H1 (cell line): ENCODE measurements at regions of chr3 and their contacts with region 1.

Region 1: DNA sequence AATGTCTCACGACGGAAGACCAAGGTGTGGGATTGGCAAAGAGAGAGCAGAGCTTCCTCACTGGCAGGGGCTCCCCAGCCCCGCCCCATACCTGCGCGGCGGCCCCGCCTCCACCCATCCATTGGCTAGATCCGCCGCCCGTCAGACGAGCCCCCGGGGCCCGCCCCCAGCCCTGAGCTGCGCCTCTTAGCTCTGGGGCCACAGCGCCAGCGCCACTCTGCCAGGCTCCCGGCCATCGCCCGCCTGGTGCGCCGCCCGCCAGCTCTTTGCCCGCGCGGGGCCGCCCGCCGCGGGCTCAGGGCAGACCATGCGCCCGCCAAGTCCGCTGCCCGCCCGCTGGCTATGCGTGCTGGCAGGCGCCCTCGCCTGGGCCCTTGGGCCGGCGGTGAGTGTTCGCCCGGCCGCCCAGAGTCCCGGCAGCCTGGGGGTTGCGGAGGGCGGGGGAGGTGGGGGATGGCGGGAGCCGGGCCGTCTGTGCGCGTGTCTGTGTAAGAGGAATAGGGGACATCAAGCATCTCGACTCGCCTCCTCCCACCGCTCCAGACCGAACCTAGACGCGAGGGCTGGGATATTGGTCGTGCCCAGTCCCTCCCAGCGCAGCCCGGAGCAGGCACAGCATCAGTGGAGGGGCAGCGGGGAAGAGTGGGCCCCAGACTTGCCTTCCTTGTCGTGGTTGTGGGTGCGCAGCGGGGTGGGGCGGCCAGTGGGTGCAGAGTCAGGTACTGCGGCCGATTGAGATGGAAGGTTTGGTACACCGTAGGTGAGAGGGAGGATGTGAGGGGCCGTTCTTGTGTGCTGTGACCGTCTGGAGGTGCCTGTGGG is at the start of gene VIPR1:
- DNase-seq: peak; percentile 73 to 99
- H3K4me3 ChIP-seq: peak within 1 kb of the TSS; percentile 50 to 77 (median 68)
- H3K27ac ChIP-seq: no peak within 1 kb of the TSS
- H3K4me1 ChIP-seq: peaks cover 0 to 12% (median 2%) of the 10 kb centered on the region in 4 experiments; a peak in 3 of 7 replicates
- H3K27me3 ChIP-seq: peaks cover 0 to 52% (median 35%) of the 10 kb centered on the region in 4 experiments; a peak in 6 of 7 replicates
- CTCF ChIP-seq: no peak
- EP300 ChIP-seq: no peak
- POLR2A ChIP-seq: peak in 1 of 2 experiments; percentile 65; a peak in 2 of 3 replicates
- RAD21 ChIP-seq: 0 out of 4 replicates have a peak, but pooled peaks of 1 of the 2 experiments have one; percentile 2
- total RNA-seq, gene VIPR1: 10.1 and 11.3 TPM in 2 replicates

Region 2: DNA sequence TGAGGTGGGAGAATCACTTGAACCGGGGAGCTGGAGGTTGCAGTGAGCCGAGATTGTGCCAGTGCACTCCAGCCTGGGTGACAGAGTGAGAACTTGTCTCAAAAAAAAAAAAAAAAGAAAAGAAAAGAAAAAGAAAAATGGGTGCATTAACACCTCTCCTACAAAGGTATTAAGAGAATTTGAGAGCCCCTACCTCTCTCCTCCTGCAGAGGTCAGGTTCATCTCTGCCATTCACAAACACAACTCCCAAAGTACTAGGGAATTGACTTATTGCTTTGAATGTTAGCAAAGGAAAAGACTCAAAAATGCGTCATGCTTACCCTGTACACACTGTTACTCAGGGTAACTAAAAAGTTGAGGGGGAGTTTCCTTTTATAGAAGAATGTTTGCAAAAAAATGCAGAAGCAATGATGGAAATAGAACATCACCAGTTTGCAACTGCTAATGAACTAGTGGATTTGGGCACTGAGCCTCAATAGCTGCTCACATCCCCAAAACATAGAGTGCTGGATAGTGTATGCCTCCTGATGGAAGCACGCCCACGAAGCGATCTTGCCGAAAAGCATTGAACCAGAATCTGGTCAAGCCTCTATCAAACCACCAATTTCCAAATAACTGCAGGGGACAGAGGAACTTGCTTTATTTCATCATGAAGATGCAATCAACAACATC is 76.8 kb before region 1 on chr3:
- CTCF ChIA-PET with region 1: no interaction called
- POLR2A ChIA-PET with region 1: no interaction called
- DNase-seq: no peak
- H3K4me3 ChIP-seq: no peak overlapping the region
- H3K27ac ChIP-seq: no peak overlapping the region
- H3K4me1 ChIP-seq: no peaks in the 10 kb centered on the region
- H3K27me3 ChIP-seq: no peaks in the 10 kb centered on the region
- CTCF ChIP-seq: no peak
- EP300 ChIP-seq: no peak
- POLR2A ChIP-seq: no peak
- RAD21 ChIP-seq: peak; percentile 13 to 15; a peak in 3 of 4 replicates

Region 3: GRCh38 chr3:42476225-42477125 is 26.2 kb before region 1 on chr3:
- CTCF ChIA-PET with region 1: interaction called, 10 read pairs
- POLR2A ChIA-PET with region 1: interaction called, 3 read pairs
- DNase-seq: no peak
- H3K4me3 ChIP-seq: no peak overlapping the region
- H3K27ac ChIP-seq: no peak overlapping the region
- H3K4me1 ChIP-seq: no peaks in the 10 kb centered on the region; a peak in 1 of 7 replicates
- H3K27me3 ChIP-seq: peaks cover 0 to 1% (median 0%) of the 10 kb centered on the region in 4 experiments; a peak in 2 of 7 replicates
- CTCF ChIP-seq: no peak
- EP300 ChIP-seq: no peak
- POLR2A ChIP-seq: no peak
- RAD21 ChIP-seq: no peak

Region 4: GRCh38 chr3:42524751-42525150 is 22.1 kb after region 1 on chr3:
- CTCF ChIA-PET with region 1: interaction called, 19 read pairs
- POLR2A ChIA-PET with region 1: interaction called, 4 read pairs
- DNase-seq: no peak
- H3K4me3 ChIP-seq: no peak overlapping the region
- H3K27ac ChIP-seq: no peak overlapping the region
- H3K4me1 ChIP-seq: no peaks in the 10 kb centered on the region; a peak in 1 of 7 replicates
- H3K27me3 ChIP-seq: no peaks in the 10 kb centered on the region
- CTCF ChIP-seq: no peak
- EP300 ChIP-seq: no peak
- POLR2A ChIP-seq: no peak
- RAD21 ChIP-seq: no peak

Region 5: DNA sequence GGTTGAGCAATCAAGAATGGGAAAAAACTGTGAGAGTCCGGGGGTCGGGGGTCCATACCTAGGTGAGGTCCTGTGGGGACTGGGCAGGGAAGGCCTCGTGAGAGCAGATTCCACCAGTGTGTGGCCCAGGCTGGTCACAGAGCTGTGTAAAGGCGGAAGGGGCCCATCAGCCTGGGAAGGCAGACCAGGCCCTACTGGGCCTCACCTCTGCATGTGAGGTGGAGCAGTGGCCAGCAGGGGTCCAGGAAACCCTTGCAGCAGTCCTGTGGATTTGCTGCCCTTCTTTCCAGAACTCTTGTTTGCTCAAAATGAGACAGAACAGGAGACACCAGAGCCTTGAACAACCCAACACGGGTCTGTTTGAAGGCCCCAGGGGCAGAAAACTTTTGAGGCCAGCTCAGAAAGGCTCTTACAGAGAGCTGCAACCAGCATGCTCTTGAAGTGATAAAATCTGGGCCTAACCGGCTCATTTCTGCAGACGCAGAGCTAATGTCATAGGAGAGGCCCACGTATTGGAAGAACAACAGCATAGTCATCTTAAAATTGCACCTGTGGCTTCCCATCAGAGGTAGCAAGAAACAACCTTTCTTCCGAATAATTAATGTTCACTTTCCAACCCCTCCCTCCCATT is 230.3 kb after region 1 on chr3:
- CTCF ChIA-PET with region 1: no interaction called
- POLR2A ChIA-PET with region 1: no interaction called
- DNase-seq: peak in 1 of 2 experiments; percentile 47
- H3K4me3 ChIP-seq: no peak overlapping the region
- H3K27ac ChIP-seq: no peak overlapping the region
- H3K4me1 ChIP-seq: peaks cover 0 to 33% (median 18%) of the 10 kb centered on the region in 4 experiments; a peak in 5 of 7 replicates
- H3K27me3 ChIP-seq: 0 out of 7 replicates have a peak, but pooled peaks cover 0 to 3% (median 0%) of the 10 kb centered on the region in 4 experiments
- CTCF ChIP-seq: peak in 2 of 3 experiments; percentile 24 to 40; a peak in 2 of 4 replicates
- EP300 ChIP-seq: no peak
- POLR2A ChIP-seq: no peak
- RAD21 ChIP-seq: no peak; a peak in 1 of 4 replicates